HepG2 (cell line): ENCODE measurements at regions of chr2 and their contacts with region 1.

Region 1: DNA sequence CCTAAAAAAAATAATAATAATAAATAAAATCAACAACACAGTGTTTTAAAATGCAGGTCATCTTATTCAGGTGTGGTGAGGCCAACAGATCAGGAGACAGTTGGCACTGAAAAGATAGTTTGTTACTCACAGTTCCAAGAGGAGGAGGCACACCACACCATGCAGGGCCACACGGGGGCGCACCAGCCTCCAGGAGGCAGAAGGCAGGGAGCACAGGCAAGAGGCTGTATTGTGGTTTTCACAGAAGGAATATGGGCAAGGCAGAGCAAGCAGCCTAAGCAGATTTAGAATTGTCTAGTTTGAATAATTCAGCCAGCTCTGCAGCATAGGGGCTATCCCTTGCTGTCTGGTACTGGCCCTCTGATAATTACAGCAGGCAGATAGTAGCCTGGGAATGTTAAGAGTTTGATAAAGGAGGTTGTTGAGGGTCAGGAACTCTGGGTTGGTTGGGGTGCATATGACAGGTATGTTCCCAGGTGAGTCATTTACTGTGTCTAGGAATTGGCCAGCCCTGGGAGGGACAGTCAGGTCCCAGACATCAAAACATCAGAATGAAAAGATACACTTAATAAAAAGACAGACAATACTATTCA is 31.3 kb downstream of the KIAA2012 start:
- DNase-seq: peak; percentile 36
- ATAC-seq: peak; percentile 95
- H3K4me3 ChIP-seq: no peak overlapping the region
- H3K27ac ChIP-seq: no peak overlapping the region
- H3K4me1 ChIP-seq: no peaks in the 10 kb centered on the region
- H3K27me3 ChIP-seq: peaks cover 0 to 8% of the 10 kb centered on the region in 2 experiments; a peak in 1 of 5 replicates
- CTCF ChIP-seq: peak; percentile 87
- EP300 ChIP-seq: no peak
- POLR2A ChIP-seq: no peak
- RAD21 ChIP-seq: peak; percentile 65

Region 2: GRCh38 chr2:202172439-202173211 is 68.3 kb after region 1 on chr2:
- CTCF ChIA-PET with region 1: interaction called, 27 read pairs
- POLR2A ChIA-PET with region 1: no interaction called
- in situ Hi-C with region 1: loop called (anchors 5 kb)
- intact Hi-C with region 1: no loop called
- DNase-seq: no peak
- ATAC-seq: peak; percentile 43; the same call in 2 of the 3 replicates
- H3K4me3 ChIP-seq: no peak overlapping the region; a peak in 1 of 6 replicates
- H3K27ac ChIP-seq: no peak overlapping the region
- H3K4me1 ChIP-seq: no peaks in the 10 kb centered on the region
- H3K27me3 ChIP-seq: no peaks in the 10 kb centered on the region; a peak in 1 of 5 replicates
- CTCF ChIP-seq: no peak
- EP300 ChIP-seq: no peak
- POLR2A ChIP-seq: no peak
- RAD21 ChIP-seq: no peak